Activated CD8-positive, alpha-beta T cell treated with anti-CD3 and anti-CD28 coated beads, Interleukin-2, amount 10 ng/mL, durations not matched to agents 7 days and 5 days (primary cell): ENCODE measurements at regions of chr1 and their contacts with region 1.

Region 1: GRCh38 chr1:156705918-156706656 is 704 bp upstream of the CRABP2 start:
- DNase-seq: peak; percentile 70
- ATAC-seq: peak; percentile 65
- H3K4me3 Mint-ChIP-seq: peak overlapping the region; percentile 71
- H3K27ac Mint-ChIP-seq: no peak overlapping the region
- H3K4me1 Mint-ChIP-seq: peaks cover 28% of the 10 kb centered on the region
- H3K27me3 Mint-ChIP-seq: peaks cover 33% of the 10 kb centered on the region

Region 2: DNA sequence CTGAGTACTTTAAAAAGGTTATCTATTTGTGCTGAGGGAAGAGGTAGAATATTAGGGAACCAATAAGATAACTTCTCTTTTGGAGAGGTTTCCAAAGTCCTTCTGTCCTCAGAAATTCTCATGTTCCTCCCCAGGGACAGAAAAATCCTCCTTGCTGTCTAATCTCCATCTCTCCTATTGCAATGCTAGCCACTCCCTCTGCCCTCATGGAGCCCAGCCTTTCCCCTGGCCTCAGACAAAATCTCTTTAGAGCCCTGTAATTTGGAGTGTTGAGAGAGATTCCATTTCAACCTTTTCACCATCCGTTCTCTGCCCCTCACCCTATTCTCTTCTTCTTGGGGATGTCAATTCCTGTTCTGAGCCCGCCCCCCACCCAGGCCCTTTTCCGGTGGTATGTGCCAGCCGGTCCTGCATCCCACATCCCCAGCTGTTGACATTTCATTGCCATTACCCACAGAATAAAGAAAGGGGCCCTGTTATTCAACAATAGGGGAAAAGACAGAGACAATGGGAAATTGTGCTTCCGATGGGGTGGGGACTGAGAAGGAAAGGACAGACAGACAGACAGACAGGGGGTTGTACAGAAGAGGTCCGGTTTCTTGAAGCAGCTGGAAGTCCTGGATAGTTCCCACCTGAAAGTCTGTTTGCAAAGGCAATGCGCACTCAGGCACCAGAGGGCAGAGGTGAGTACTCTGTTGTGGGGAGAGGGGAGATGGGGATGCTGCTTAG is 87.1 kb before region 1 on chr1 and contains the start of gene HAPLN2:
- CTCF ChIA-PET with region 1: interaction called, 15 read pairs
- POLR2A ChIA-PET with region 1: no interaction called
- DNase-seq: peak; percentile 37
- ATAC-seq: no peak
- H3K4me3 Mint-ChIP-seq: no peak within 1 kb of the TSS
- H3K27ac Mint-ChIP-seq: no peak within 1 kb of the TSS
- H3K4me1 Mint-ChIP-seq: peaks cover 5% of the 10 kb centered on the region
- H3K27me3 Mint-ChIP-seq: peaks cover 58% of the 10 kb centered on the region
- total RNA-seq, gene HAPLN2: not detected

Region 3: DNA sequence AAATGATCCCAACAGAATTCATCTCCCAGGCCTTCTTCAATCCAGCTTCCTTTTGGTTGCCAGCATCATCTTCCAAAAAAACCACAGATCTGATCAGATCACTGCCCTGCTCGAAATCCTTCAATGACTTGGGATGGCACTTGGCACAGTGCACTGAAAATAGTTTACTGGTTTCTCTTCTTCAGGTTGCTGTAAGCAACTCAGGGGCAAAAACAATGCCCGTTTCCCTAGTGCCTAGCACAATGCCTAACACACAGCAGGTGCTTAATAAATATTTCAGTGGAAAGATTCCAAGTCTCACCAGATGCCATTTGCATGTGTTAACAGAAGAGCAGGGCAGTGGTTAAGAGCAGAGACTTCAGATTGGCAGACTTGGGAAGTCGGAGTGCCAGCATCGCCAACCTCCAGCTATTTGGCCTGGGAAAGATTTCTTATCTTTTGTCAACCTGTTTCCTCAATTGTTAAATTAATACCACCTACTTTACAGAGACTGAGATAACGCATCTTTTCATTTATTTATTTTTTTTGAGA is 11.3 kb after region 1 on chr1:
- CTCF ChIA-PET with region 1: interaction called, 29 read pairs
- POLR2A ChIA-PET with region 1: no interaction called
- DNase-seq: no peak
- ATAC-seq: no peak
- H3K4me3 Mint-ChIP-seq: no peak overlapping the region
- H3K27ac Mint-ChIP-seq: no peak overlapping the region
- H3K4me1 Mint-ChIP-seq: peaks cover 5% of the 10 kb centered on the region
- H3K27me3 Mint-ChIP-seq: no peaks in the 10 kb centered on the region

Region 4: DNA sequence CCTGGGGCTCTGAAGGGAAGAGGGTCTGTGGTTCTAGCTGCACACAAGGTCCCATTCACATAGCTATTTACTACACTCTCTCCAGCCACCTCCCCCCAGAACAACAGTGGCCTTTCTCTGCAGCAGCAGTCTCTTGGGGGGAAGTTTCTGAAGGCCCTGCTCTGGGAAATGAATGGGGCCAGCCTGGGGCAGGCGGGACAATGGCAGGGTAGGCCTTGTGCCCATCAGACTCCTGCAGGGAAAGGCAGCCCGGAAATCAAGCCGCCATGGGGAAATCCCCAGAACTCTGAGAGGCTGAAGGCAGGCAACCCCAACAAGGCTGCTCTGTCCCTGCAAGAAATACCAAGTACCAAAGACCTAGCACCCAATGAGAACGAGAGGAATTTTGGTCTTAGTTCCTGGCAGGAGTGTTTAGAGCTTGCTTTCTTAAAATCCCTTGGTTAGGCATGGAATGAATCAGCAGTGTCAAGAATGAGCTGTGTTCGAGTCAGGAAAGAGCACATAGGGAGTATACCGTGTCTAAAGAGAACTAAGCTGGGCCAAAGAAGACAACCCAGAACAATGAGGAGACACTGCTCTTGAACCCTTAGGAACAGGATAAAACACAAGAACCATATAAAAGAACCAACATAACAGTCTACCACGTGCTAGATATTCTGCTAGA is 328.2 kb after region 1 on chr1:
- CTCF ChIA-PET with region 1: no interaction called
- POLR2A ChIA-PET with region 1: no interaction called
- DNase-seq: no peak
- ATAC-seq: no peak
- H3K4me3 Mint-ChIP-seq: no peak overlapping the region
- H3K27ac Mint-ChIP-seq: no peak overlapping the region
- H3K4me1 Mint-ChIP-seq: no peaks in the 10 kb centered on the region
- H3K27me3 Mint-ChIP-seq: peaks cover 41% of the 10 kb centered on the region